Calu3 (cell line): ENCODE measurements at regions of chr10 and their contacts with region 1.

Region 1: GRCh38 chr10:65528986-65529385 is 1396.8 kb upstream of the LRRTM3 start:
- DNase-seq: no peak
- H3K4me3 Mint-ChIP-seq: no peak overlapping the region
- H3K27ac Mint-ChIP-seq: no peak overlapping the region
- H3K4me1 Mint-ChIP-seq: no peaks in the 10 kb centered on the region
- H3K27me3 Mint-ChIP-seq: no peaks in the 10 kb centered on the region
- CTCF ChIP-seq: no peak

Region 2: GRCh38 chr10:65710306-65710705 is 181.3 kb after region 1 on chr10:
- CTCF ChIA-PET with region 1: no interaction called
- intact Hi-C with region 1: loop called (anchors 5 kb)
- DNase-seq: no peak
- H3K4me3 Mint-ChIP-seq: no peak overlapping the region
- H3K27ac Mint-ChIP-seq: no peak overlapping the region
- H3K4me1 Mint-ChIP-seq: peaks cover 19% of the 10 kb centered on the region
- H3K27me3 Mint-ChIP-seq: no peaks in the 10 kb centered on the region
- CTCF ChIP-seq: no peak